ENCODE measurements at regions of chr18 and their contacts with region 1.

Region 1: DNA sequence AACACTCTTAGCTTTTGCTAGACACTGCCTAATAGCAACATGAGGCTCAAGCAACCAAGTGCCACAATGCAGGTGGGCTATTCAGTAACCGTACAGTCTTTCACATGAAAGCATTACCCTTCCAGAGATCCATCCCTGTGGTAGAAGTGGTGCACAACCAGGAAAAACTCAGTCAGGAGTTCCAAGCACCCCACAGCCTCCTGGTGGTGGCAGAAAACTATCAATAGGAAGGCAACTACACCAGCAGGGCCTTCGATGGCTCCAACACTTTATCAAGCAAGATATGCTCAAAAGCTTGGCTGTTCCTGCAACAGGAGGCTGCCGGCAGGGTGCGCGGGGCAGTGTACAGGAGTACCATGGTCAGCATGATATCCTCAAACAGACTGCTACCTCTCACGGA is 176.1 kb upstream of the DLGAP1 start:
- DNase-seq: no peak
- H3K4me3 ChIP-seq: no peak overlapping the region
- H3K27ac ChIP-seq: no peak overlapping the region
- H3K4me1 ChIP-seq: no peaks in the 10 kb centered on the region
- H3K27me3 ChIP-seq: no peaks in the 10 kb centered on the region
- CTCF ChIP-seq: no peak
- POLR2A ChIP-seq: no peak

Region 2: GRCh38 chr18:4720518-4720917 is 89.3 kb after region 1 on chr18:
- intact Hi-C with region 1: loop called (anchors 10 kb)
- DNase-seq: no peak
- H3K4me3 ChIP-seq: no peak overlapping the region
- H3K27ac ChIP-seq: no peak overlapping the region
- H3K4me1 ChIP-seq: no peaks in the 10 kb centered on the region
- H3K27me3 ChIP-seq: no peaks in the 10 kb centered on the region
- CTCF ChIP-seq: no peak
- POLR2A ChIP-seq: no peak